Endothelial cell of umbilical vein (primary cell): ENCODE measurements at regions of chr16 and their contacts with region 1.

Region 1: DNA sequence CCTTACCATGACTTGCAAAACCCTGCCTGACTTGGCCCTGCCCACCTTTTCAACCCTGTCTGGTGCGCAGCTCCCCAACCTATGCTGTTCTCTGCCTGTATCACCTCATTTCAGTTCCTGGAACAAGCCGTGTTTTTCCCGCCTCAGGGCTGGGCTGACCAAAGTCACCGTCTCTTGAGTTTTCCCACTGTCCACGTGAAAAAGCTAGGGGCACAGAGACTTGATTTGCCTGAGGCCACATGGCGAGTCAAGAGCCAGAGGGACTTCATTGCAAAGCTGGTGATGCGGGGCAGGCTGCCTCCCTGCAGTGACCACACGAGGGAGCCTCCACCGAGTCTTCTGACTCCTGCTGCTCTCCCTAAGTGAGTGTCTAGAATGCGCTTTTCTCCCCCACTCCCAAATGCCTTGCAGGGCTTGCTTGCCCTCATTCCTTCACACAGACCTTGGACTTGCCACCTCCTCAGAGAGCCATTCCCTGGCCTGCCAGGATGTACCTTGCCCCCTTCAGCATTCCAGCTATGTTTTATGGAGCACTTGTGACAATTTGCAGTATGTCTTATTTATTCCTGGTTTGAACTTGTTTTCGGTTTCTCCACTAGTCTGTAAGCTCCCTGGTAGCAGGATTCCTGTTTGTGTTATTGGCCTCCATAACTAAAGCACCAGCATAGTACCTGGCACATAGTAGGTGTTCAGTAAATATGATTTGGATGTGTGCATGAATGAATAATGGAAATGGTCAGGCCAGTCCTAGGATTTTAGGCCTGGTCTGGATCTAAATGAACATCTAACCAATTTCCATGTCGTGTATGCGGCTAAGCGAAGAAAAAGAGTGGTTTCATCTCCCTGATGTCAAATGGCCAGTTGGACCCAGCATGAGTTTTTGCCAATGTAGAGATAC is 252.3 kb downstream of the SNX29 start:
- DNase-seq: peak; percentile 67
- H3K4me3 ChIP-seq: no peak overlapping the region
- H3K27ac ChIP-seq: no peak overlapping the region
- H3K4me1 ChIP-seq: no peaks in the 10 kb centered on the region
- H3K27me3 ChIP-seq: no peaks in the 10 kb centered on the region
- CTCF ChIP-seq: peak; percentile 64 to 93
- POLR2A ChIP-seq: no peak

Region 2: GRCh38 chr16:12240036-12240435 is 11.2 kb after region 1 on chr16:
- CTCF ChIA-PET with region 1: interaction called, 18 read pairs
- POLR2A ChIA-PET with region 1: no interaction called
- dilution Hi-C with region 1: no loop called
- intact Hi-C with region 1: no loop called
- DNase-seq: peak; percentile 54
- H3K4me3 ChIP-seq: no peak overlapping the region
- H3K27ac ChIP-seq: no peak overlapping the region
- H3K4me1 ChIP-seq: no peaks in the 10 kb centered on the region
- H3K27me3 ChIP-seq: no peaks in the 10 kb centered on the region
- CTCF ChIP-seq: no peak
- POLR2A ChIP-seq: no peak

Region 3: DNA sequence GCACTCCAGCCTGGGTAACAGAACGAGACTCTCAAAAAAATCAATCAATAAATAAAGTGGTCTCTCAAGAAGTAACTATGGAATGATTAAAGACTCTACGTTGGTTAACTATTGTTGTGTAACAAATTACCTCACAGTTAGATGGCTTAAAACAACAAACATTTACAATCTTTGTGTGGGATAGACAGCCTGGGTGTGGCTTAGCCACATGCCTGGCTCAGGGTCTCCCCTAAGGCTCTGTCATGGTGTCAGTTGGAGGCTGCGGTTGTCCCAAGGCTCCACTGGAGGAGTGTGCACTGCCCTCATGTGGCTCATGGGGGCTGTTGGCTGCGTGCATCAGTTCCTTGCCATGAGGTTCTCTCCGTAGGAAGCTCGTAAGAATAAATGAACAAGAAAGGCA is 42.2 kb after region 1 on chr16:
- CTCF ChIA-PET with region 1: no interaction called
- POLR2A ChIA-PET with region 1: no interaction called
- dilution Hi-C with region 1: no loop called
- intact Hi-C with region 1: no loop called
- DNase-seq: no peak
- H3K4me3 ChIP-seq: no peak overlapping the region
- H3K27ac ChIP-seq: no peak overlapping the region
- H3K4me1 ChIP-seq: no peaks in the 10 kb centered on the region
- H3K27me3 ChIP-seq: no peaks in the 10 kb centered on the region
- CTCF ChIP-seq: peak in 1 of 2 donors; percentile 5
- POLR2A ChIP-seq: no peak

Region 4: GRCh38 chr16:12311309-12311708 is 82.5 kb after region 1 on chr16:
- CTCF ChIA-PET with region 1: interaction called, 11 read pairs
- POLR2A ChIA-PET with region 1: no interaction called
- dilution Hi-C with region 1: no loop called
- intact Hi-C with region 1: no loop called
- DNase-seq: peak; percentile 27
- H3K4me3 ChIP-seq: no peak overlapping the region
- H3K27ac ChIP-seq: no peak overlapping the region
- H3K4me1 ChIP-seq: no peaks in the 10 kb centered on the region
- H3K27me3 ChIP-seq: no peaks in the 10 kb centered on the region
- CTCF ChIP-seq: peak in 1 of 2 donors; percentile 12
- POLR2A ChIP-seq: no peak

Region 5: DNA sequence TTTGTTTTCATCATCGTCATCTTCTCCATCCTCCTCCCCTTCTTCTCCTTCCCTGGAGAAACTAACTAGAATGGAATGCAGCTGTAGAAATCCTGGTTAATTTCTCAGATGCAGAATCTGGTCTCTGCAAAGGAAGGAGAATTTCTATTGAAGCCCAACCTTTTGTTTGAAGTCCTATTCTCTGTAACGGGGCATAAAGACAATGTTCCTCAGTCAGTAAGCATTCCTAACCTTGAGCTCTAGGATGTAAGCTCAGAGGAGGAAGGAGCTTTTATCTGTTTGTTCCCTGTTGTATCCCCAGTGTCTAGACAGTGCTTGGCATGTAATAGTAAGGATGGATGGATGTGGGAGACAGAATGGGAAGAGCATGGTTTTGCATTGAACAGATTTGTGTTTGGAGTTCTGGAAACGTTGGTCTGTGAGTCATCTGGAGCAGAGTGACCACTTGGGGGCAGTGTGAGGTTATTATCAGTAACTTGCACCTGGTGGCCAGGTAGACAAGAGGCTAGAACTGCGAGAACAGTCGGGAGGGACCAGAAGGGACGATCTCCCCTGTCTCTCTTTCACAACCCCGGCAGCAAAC is 111.4 kb after region 1 on chr16:
- CTCF ChIA-PET with region 1: interaction called, 7 read pairs
- POLR2A ChIA-PET with region 1: no interaction called
- dilution Hi-C with region 1: no loop called
- intact Hi-C with region 1: loop called (anchors 1 kb)
- DNase-seq: peak; percentile 47
- H3K4me3 ChIP-seq: no peak overlapping the region
- H3K27ac ChIP-seq: no peak overlapping the region
- H3K4me1 ChIP-seq: peaks cover 17% of the 10 kb centered on the region
- H3K27me3 ChIP-seq: no peaks in the 10 kb centered on the region
- CTCF ChIP-seq: peak; percentile 45 to 46
- POLR2A ChIP-seq: no peak